Activated CD4-positive, alpha-beta memory T cell treated with anti-CD3 and anti-CD28 coated beads for 36 hours (primary cell): ENCODE measurements at regions of chr13 and their contacts with region 1.

Region 1: GRCh38 chr13:99859178-99860177 is 112.1 kb downstream of the ZIC5 start:
- DNase-seq: peak; percentile 88
- H3K4me3 Mint-ChIP-seq: no peak overlapping the region
- H3K27ac Mint-ChIP-seq: peak overlapping the region; percentile 41
- H3K4me1 Mint-ChIP-seq: peaks cover 15% of the 10 kb centered on the region
- H3K27me3 Mint-ChIP-seq: peaks cover 14% of the 10 kb centered on the region

Region 2: GRCh38 chr13:99821741-99822140 is 37.7 kb before region 1 on chr13:
- CTCF ChIA-PET with region 1: interaction called, 3 read pairs
- POLR2A ChIA-PET with region 1: interaction called, 3 read pairs
- intact Hi-C with region 1: loop called (anchors 1 kb)
- DNase-seq: no peak
- H3K4me3 Mint-ChIP-seq: no peak overlapping the region
- H3K27ac Mint-ChIP-seq: no peak overlapping the region
- H3K4me1 Mint-ChIP-seq: peaks cover 16% of the 10 kb centered on the region
- H3K27me3 Mint-ChIP-seq: no peaks in the 10 kb centered on the region

Region 3: GRCh38 chr13:99834246-99834645 is 25.2 kb before region 1 on chr13:
- CTCF ChIA-PET with region 1: no interaction called
- POLR2A ChIA-PET with region 1: no interaction called
- intact Hi-C with region 1: no loop called
- DNase-seq: no peak
- H3K4me3 Mint-ChIP-seq: no peak overlapping the region
- H3K27ac Mint-ChIP-seq: no peak overlapping the region
- H3K4me1 Mint-ChIP-seq: no peaks in the 10 kb centered on the region
- H3K27me3 Mint-ChIP-seq: no peaks in the 10 kb centered on the region

Region 4: DNA sequence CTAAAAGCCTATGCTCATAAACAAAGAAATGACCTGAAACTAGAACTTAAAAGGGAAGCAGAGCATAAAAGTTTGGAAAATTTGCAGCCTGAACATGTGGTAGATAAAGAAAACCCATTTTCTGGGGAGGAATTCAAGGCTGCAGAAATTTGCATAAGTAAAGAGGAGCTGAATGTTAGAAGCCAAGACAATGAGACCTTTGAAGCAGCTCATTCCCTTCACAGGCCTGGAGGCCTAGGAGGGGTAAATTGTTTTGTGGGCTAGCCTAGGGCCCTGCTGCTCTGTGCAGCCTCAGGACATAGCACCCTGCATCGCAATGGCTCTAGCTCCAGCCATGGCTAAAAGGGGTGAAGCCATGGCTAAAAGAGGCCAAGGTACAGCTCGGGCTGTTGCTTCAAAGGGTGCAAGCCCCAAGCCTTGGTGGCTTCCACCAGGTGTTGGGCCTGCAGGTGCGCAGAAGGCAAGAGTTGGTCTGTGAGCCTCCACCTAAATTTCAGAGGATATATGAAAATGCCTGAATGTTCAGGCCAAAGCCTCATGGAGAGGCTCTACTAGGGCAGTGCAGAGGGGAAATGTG is 160.4 kb after region 1 on chr13:
- CTCF ChIA-PET with region 1: no interaction called
- POLR2A ChIA-PET with region 1: no interaction called
- intact Hi-C with region 1: no loop called
- DNase-seq: no peak
- H3K4me3 Mint-ChIP-seq: no peak overlapping the region
- H3K27ac Mint-ChIP-seq: no peak overlapping the region
- H3K4me1 Mint-ChIP-seq: no peaks in the 10 kb centered on the region
- H3K27me3 Mint-ChIP-seq: no peaks in the 10 kb centered on the region